ENCODE measurements at regions of chr3 and their contacts with region 1.

Region 1: DNA sequence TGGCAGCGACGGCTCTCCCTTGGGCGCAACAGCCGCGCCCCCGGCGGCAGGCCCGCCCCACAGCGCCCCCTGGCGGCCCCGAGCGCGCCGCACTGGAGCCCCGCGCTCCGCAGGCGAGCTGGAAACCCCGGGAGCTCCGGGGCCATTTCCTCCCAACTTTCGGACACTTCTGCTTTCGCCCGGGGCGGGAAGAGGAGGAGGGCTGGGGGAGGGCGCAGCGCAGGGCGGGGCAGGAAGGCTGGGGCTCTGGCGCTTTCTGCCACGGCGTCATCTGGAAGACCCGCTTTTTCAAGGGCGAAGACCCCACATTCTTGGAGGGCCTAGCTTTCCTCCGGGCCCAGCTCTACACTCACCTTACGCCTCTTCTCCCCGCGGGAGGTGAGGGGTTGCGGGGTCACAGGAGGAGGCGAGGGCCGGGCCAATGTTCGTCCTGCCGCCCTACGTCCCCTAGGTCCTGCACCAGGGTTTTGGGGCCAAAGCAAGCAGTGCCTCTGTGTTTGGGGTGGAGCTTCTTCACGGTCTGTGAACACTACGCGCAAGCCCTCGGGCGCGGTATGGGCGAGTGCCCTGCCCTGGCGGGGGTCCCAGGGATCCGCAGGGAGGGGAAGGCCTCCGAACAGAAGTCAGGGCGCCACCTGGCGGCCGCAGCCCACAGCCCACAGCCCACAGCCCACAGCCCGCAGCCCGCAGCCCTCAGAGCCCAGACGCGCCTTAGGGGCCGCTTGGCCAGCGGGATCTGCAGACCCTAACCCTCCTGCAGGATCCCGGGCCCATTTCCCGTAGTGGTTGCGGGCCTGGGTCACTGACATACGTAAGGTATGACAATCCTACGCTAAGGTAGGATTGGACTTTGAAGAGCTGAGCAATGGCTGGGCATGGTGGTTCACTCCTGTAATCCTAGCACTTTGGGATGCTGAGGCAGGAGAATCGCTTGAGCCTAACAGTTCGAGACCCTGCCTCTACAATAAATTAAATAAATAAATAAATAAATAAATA is 31.1 kb downstream of the FOXL2 start:
- DNase-seq: peak; percentile 93
- H3K4me3 ChIP-seq: peak overlapping the region; percentile 71
- H3K27ac ChIP-seq: peak overlapping the region; percentile 41
- H3K4me1 ChIP-seq: peaks cover 4% of the 10 kb centered on the region
- CTCF ChIP-seq: peak; percentile 75

Region 2: DNA sequence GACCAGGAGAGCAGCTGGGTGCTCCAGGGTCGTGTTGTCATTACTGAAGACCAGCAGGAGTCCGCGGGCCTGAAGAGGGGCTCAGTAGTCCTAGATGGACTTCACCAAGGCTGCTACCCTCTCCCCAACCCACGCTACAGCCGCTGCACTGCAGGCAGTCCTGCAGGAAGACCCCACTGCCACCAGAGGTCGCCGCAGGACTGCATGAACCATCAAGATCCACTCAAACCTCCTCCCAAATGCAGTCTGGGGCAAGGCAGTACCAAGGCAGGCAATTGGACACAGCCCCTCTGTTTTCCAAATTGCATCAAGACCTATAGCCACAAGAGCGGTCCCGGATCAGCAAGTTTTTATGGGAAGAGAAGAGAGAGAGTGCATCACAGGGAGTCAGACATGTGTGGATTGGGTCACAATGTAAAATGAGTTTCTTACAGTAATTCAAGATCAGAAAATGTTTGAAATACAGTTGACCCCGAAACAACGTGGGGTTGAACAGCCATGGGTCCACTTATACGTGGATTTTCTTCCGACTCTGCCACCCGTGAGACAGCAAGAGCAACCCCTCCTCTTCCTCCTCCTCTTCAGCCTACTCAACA is 847.1 kb before region 1 on chr3:
- CTCF ChIA-PET with region 1: no interaction called
- POLR2A ChIA-PET with region 1: no interaction called
- intact Hi-C with region 1: loop called (anchors 10 kb)
- DNase-seq: peak; percentile 73
- H3K4me3 ChIP-seq: no peak overlapping the region
- H3K27ac ChIP-seq: no peak overlapping the region
- H3K4me1 ChIP-seq: no peaks in the 10 kb centered on the region
- CTCF ChIP-seq: peak; percentile 95

Region 3: GRCh38 chr3:138329127-138329983 is 586.4 kb before region 1 on chr3 and contains the start of gene NME9:
- CTCF ChIA-PET with region 1: no interaction called
- POLR2A ChIA-PET with region 1: interaction called, 3 read pairs
- intact Hi-C with region 1: loop called (anchors 2 kb)
- DNase-seq: peak; percentile 88
- H3K4me3 ChIP-seq: peak within 1 kb of the TSS; percentile 69
- H3K27ac ChIP-seq: no peak within 1 kb of the TSS
- H3K4me1 ChIP-seq: peaks cover 18% of the 10 kb centered on the region
- CTCF ChIP-seq: peak; percentile 87
- total RNA-seq, gene NME9: 0.54 TPM in 1 of 2 replicates, not detected in the other

Region 4: DNA sequence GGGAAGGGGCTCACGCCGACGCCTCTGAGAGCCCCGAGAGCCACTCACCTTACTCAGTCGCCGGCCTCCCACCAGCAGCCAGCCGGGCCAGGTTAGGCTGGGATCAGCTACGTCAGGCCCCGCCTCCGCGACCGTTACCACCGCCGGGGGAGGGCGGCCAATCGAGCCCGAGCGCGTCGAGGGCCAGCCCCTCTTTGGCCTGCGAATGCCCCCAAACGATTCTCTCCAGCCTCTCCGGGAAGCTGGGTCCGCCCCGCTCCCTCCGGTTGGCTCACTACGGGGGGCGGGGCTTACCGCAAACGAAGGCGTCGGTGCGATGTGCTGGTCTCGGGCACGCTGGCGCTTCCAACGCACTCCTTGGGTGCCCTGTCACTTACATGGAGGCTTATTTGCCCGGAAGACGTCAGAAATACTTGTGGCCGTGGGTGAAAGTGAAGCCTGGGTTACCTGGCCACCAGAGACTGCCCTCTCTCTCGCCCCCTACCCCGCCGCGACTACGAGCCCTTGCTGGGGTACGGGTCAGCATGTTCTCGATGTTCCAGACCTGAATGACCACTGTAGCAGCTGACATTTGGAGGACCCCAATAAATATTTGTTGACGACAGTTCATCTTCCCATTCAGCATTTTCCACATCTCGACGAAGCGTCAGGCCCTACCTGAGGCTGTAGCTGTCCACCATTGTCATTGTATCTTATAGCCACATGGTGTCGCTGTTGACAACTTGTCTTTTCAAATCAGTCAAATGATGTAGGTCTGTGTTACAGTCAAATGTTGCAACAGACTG is 321.5 kb before region 1 on chr3 and contains the start of gene CEP70:
- CTCF ChIA-PET with region 1: interaction called, 37 read pairs
- POLR2A ChIA-PET with region 1: interaction called, 8 read pairs
- intact Hi-C with region 1: loop called (anchors 1 kb)
- DNase-seq: peak; percentile 94
- H3K4me3 ChIP-seq: peak within 1 kb of the TSS; percentile 76
- H3K27ac ChIP-seq: peak within 1 kb of the TSS; percentile 83
- H3K4me1 ChIP-seq: peaks cover 21% of the 10 kb centered on the region
- CTCF ChIP-seq: peak; percentile 94
- total RNA-seq, gene CEP70: 29.2 and 34.2 TPM in 2 replicates

Region 5: DNA sequence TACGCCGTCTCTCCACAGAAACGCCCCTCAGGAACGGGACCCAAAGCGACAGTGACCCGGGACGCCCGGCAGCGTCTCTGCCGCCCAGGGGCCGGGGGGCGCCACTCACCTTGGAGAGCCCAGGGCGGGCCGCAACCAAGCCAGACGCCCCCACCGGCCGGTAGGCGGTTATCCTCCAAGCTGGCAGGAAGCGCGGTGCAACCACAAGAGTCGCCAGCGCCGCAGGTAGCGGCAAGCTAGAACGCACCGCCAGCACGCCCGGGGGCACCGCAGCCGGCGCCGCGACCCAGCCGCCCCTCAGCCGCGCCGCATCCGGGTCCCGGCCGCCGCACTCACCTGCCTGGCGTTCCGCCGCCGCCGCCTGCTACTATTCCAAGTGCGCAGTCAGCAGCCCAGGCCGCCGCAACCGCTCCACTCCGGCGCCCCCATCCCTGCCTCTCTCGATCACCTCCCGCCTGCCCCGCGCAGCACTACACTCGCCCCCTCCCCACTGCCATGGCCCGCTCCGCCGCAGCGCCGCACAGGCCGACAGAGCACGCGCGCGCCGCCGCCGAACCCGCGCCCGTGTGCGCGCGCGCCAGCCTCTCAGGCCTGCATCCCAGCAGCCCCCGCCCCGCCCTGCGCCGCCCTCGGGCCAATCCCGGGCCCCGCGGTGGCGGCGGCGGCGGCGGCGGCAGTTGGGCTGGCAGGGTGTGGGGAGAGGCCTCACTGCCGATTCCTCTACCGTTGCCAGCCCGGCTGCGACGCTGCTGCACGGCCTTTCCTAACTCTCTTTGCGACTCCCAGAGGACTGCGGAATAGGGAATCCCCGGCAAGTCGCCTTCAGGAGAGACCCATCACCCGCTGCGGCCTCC is 81.2 kb before region 1 on chr3 and contains the start of gene PIK3CB:
- CTCF ChIA-PET with region 1: interaction called, 4 read pairs
- POLR2A ChIA-PET with region 1: no interaction called
- intact Hi-C with region 1: loop called (anchors 1 kb)
- DNase-seq: peak; percentile 89
- H3K4me3 ChIP-seq: peak within 1 kb of the TSS; percentile 85
- H3K27ac ChIP-seq: peak within 1 kb of the TSS; percentile 74
- H3K4me1 ChIP-seq: peaks cover 16% of the 10 kb centered on the region
- CTCF ChIP-seq: peak; percentile 71
- total RNA-seq, gene PIK3CB: 7.1 and 8.2 TPM in 2 replicates

Measured in OCI-LY7 (cell line).